Vagina (tissue), 2 donors: ENCODE measurements at regions of chr5 and their contacts with region 1.

Region 1: DNA sequence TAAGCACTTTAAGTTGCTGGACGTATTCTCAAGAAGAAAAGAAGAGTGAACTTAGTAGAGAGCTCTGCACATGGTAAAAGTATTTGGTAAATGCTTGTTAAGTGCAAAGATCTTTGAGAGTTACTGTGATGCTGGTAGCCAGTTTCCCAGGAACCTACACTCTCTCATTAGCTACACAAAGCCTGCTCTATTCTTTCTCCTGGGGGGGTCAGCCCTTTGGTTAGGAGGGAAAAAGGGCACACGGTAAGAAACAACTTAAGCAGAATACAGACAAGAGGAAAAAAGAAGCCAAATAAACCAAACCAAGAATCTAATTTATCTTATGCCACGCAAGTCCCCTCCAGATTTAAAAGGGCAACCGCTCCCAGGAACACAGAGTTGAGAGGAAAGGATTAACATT is 1100.1 kb upstream of the CDH10 start:
- DNase-seq: no peak
- H3K4me3 ChIP-seq: no peak overlapping the region
- H3K27ac ChIP-seq: no peak overlapping the region
- H3K4me1 ChIP-seq: no peaks in the 10 kb centered on the region
- H3K27me3 ChIP-seq: no peaks in the 10 kb centered on the region
- CTCF ChIP-seq: no peak
- POLR2A ChIP-seq: no peak

Region 2: DNA sequence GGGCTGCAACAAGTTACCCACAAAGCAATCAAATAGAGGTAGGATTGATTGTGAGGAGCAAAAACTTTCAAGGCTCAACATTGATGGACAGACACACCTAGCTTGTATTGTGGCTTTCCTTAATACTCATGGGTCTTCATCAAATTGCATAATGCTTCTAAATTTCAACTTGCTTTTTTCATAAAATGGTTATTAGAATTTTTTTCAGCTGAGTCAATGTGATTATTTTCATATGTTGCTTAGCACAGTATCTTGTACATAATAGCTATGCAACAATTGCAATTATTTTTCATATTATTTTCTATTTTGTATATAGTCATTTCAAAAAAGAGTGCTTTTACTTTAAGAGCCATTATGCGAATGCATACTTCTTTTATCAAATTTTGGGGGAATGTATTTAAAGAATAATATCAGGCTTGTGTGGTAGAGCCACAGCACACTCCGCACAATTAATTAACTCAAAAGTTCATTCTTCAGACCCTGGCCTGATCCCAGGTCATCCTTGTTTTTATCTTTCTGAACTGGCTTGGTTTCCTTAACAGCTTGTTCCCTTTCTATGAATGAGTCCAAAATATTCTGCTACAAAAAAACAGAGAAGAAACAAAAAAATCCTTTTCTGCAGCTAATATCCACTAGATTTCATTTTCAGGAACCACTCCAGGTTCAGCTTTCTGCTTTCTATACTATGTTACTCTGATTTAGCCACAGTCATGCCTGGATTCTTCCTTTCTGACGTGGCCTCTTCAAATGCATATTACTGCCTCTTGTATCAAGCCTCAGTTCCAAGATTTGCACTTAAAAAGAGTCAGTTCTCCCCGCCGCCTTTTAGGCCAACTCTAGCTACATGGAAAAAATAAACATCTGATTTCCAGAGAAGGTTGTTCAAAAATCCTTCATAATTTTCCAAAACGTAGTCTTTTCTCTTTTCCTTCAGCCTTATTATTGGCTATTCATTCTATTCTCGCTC is 1338.8 kb after region 1 on chr5:
- intact Hi-C with region 1: no loop called
- DNase-seq: no peak
- H3K4me3 ChIP-seq: no peak overlapping the region
- H3K27ac ChIP-seq: no peak overlapping the region
- H3K4me1 ChIP-seq: no peaks in the 10 kb centered on the region
- H3K27me3 ChIP-seq: no peaks in the 10 kb centered on the region
- CTCF ChIP-seq: no peak
- POLR2A ChIP-seq: no peak

Region 3: DNA sequence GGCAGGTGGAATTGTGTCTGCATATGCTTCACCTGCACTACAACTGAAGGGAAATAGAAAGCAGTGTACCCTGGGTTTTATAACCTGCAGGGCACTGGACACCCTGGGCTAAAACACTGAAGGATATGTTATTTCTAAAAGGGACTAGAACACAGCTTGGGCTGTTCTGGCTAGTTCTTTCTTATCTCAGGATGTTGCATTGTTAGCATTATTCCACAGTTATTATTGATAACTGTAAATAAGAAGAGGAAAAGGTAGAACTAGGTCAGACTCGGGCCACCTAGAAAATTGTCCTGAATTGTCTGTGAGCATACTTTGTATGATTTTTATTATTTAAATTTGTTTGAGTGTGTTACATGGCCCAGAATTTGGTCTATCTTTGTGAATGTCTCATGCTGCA is 1787.4 kb after region 1 on chr5:
- intact Hi-C with region 1: loop called (anchors 5 kb)
- DNase-seq: no peak
- H3K4me3 ChIP-seq: no peak overlapping the region
- H3K27ac ChIP-seq: no peak overlapping the region
- H3K4me1 ChIP-seq: no peaks in the 10 kb centered on the region
- H3K27me3 ChIP-seq: no peaks in the 10 kb centered on the region
- CTCF ChIP-seq: no peak
- POLR2A ChIP-seq: no peak